ENCODE measurements at regions of chr1 and their contacts with region 1.

Region 1: DNA sequence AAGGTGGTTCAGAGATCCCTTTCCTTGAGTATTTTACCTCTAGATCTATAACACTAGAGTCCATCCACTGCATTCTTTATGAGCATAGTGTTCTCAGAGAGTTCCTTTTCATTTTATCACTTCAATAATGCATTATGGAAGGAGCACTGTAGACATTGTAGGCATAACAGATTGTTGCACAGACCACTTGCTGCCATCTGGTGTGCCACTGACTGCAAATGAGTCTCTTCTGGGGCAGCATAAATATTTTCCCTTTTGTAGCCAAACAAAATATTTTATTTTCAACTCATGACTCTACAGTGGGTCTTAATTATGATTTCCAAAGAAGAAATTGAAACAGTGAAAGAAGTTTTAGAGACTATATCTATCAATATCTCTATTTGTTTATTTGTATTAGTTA is 290.4 kb downstream of the OLFM3 start:
- DNase-seq: no peak
- ATAC-seq: no peak

Region 2: GRCh38 chr1:101875891-101876290 is 169.5 kb after region 1 on chr1:
- intact Hi-C with region 1: no loop called
- DNase-seq: no peak
- ATAC-seq: no peak

Region 3: GRCh38 chr1:102241431-102242338 is 535.3 kb after region 1 on chr1:
- intact Hi-C with region 1: loop called in 1 of 2 experiments (anchors 10 kb)
- DNase-seq: no peak
- ATAC-seq: no peak

Measured in left colon (tissue), 2 donors.